Ascending aorta (tissue), 2 donors: ENCODE measurements at regions of chr1 and their contacts with region 1.

Region 1: GRCh38 chr1:55718758-55719671 is 503.9 kb upstream of the USP24 start:
- DNase-seq: peak in 1 of 2 donors; percentile 90
- H3K4me3 ChIP-seq: no peak overlapping the region
- H3K27ac ChIP-seq: peak overlapping the region; percentile 72 to 80
- H3K4me1 ChIP-seq: peaks cover 8 to 19% of the 10 kb centered on the region in 2 donors
- H3K27me3 ChIP-seq: no peaks in the 10 kb centered on the region
- CTCF ChIP-seq: no peak

Region 2: DNA sequence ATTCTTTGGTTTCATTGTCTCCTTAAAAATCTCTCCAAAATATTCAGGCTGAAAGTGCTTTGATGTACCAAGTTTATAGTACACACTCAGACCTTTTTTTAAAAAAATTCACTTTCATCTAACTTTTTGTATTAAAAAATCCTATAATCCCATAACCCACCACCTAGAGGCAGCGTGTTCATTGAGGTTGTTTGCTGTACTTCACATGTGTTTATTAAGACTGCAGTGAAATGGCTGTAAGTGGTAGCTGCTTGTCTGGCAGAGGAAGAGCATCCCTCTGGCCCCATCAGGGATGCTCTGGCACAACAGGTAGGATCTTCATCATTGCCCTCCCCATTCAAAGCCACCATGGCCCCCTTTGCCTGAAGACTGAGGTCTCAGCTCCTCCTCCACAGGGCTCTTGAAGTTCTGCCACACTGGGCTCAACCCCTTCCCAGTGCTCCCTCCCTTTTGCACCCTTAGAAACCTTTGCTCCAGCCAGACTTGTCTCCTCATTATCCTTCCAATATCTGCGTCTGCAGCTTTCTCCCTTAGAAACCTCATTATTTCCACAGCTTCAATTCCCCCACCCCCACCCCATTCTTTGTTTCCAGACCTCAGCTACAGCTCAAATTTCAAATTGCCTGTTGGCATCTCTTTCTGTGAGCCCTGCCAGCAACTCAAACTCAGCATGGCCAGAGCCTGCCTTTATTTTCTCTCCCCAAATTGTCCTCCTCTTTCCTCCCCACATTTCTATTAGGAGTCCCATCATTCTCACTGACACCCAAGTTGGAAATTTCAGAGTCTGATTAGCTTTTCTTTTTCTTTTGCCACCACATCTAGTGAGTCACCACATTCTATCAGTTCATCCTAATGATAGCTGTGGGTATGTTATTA is 134.3 kb before region 1 on chr1:
- intact Hi-C with region 1: loop called (anchors 5 kb)
- DNase-seq: no peak
- H3K4me3 ChIP-seq: no peak overlapping the region
- H3K27ac ChIP-seq: peak overlapping the region; percentile 27 to 28
- H3K4me1 ChIP-seq: peaks cover 11 to 40% of the 10 kb centered on the region in 2 donors
- H3K27me3 ChIP-seq: no peaks in the 10 kb centered on the region
- CTCF ChIP-seq: no peak

Region 3: GRCh38 chr1:55670331-55671082 is 48.5 kb before region 1 on chr1:
- intact Hi-C with region 1: loop called (anchors 2 kb)
- DNase-seq: no peak
- H3K4me3 ChIP-seq: peak overlapping the region in 1 of 2 donors; percentile 31
- H3K27ac ChIP-seq: peak overlapping the region; percentile 57 to 85
- H3K4me1 ChIP-seq: peaks cover 0 to 18% of the 10 kb centered on the region in 2 donors
- H3K27me3 ChIP-seq: no peaks in the 10 kb centered on the region
- CTCF ChIP-seq: peak in 2 of 3 experiments; percentile 17 to 35

Region 4: DNA sequence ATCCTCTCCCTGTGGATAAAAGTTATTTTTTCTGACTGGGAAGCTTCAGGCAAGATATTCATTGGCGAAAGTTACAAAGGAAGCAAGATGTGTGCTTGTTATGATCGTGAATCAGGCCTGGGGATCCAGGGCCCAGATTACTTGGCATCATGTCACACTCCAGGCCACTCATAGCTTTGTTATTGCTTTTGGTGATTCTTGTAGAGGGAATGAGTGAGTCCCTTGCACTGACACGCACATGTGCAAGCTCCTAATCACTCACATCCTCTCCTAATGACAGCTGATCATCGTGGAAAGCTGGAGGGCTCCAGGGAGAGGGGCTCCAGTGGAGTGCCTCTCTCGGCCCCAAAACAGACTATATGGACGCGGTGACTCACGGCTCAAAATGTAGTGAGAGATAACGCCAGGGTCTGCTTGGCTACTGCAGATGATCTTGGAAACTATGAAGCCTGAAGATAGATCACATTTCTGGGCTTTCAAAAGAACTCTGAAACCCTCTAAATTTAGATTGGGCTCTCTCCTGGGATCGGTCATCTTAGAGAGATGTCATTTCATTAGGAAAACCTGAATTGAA is 22.7 kb before region 1 on chr1:
- intact Hi-C with region 1: loop called (anchors 2 kb)
- DNase-seq: peak in 1 of 2 donors; percentile 88
- H3K4me3 ChIP-seq: no peak overlapping the region
- H3K27ac ChIP-seq: peak overlapping the region; percentile 62 to 64
- H3K4me1 ChIP-seq: peaks cover 4 to 24% of the 10 kb centered on the region in 2 donors
- H3K27me3 ChIP-seq: no peaks in the 10 kb centered on the region
- CTCF ChIP-seq: no peak